ENCODE measurements at regions of chr1 and their contacts with region 1.

Region 1: GRCh38 chr1:68384321-68384813 is 65.4 kb downstream of the RPE65 start:
- DNase-seq: peak; percentile 100
- ATAC-seq: peak; percentile 97
- H3K4me3 ChIP-seq: no peak overlapping the region
- H3K27ac ChIP-seq: peak overlapping the region; percentile 68
- H3K4me1 ChIP-seq: peaks cover 7% of the 10 kb centered on the region; the same call in 1 of the 2 replicates
- H3K27me3 ChIP-seq: no peaks in the 10 kb centered on the region
- CTCF ChIP-seq: peak; percentile 60
- POLR2A ChIP-seq: no peak
- RAD21 ChIP-seq: peak; percentile 63

Region 2: DNA sequence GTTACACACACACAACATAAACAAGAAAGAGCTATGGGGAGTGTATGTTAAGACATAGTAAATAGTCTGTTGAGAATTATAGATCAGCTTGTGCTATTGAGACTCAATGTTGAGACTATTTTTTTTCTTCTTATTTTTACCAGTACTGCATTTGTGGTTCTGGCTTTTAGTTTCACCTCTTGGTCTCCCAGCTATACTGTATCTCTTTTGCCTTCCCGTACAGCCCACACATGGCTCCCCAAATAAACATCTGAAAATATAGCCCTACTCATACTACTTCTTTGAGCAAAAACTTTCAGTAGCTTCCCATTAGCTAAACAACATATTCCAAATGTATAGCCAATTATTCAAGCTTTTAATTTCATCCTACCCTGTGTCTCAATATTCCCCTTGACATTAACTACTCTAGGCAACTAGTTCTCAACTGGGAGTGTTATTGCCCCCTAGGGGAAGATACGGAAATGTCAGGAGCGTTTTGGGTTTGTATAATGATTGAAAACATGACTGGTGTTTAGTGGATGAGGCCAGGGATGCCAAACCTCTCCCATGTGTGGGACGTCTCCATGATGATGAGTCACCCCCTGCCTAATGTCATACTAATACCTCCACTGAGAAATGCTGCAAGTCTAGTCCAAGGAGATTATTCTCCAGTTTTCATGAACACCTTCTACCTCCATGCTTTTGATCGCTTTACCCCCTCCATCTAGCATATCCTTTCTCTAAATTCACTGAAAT is 58.6 kb after region 1 on chr1:
- CTCF ChIA-PET with region 1: interaction called, 3 read pairs
- POLR2A ChIA-PET with region 1: no interaction called
- dilution Hi-C with region 1: no loop called
- in situ Hi-C with region 1: no loop called
- intact Hi-C with region 1: loop called (anchors 2 kb)
- DNase-seq: peak; percentile 82
- ATAC-seq: peak; percentile 96
- H3K4me3 ChIP-seq: no peak overlapping the region
- H3K27ac ChIP-seq: no peak overlapping the region
- H3K4me1 ChIP-seq: no peaks in the 10 kb centered on the region
- H3K27me3 ChIP-seq: no peaks in the 10 kb centered on the region
- CTCF ChIP-seq: peak; percentile 74
- POLR2A ChIP-seq: no peak
- RAD21 ChIP-seq: peak; percentile 67